H1 (cell line): ENCODE measurements at regions of chr3 and their contacts with region 1.

Region 1: GRCh38 chr3:75727985-75728384 is 57.4 kb downstream of the ZNF717 start:
- DNase-seq: no peak
- H3K4me3 ChIP-seq: no peak overlapping the region
- H3K27ac ChIP-seq: no peak overlapping the region
- H3K4me1 ChIP-seq: no peaks in the 10 kb centered on the region
- H3K27me3 ChIP-seq: peaks cover 0 to 1% (median 0%) of the 10 kb centered on the region in 4 experiments; a peak in 1 of 7 replicates
- CTCF ChIP-seq: no peak
- EP300 ChIP-seq: no peak
- POLR2A ChIP-seq: no peak
- RAD21 ChIP-seq: no peak

Region 2: DNA sequence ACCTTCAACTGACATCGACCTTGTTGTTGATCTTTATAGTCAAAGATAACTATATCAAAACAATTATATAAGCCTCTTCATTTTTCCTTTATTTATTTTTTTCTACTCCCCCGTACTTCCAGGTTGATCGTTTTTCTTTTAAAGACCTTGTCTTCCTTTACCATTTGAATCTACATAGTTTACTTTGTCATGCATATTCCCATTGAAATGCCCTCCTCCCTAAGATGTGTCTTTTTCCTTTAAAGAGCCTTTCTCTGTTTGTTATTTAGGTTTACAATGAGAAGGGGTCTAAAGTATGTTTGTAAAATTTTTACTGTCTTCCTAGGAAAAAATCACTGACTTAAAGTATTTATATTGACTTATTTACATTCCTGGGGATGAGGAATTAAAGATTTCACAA is 86.8 kb after region 1 on chr3:
- CTCF ChIA-PET with region 1: interaction called, 12 read pairs
- POLR2A ChIA-PET with region 1: no interaction called
- DNase-seq: no peak
- H3K4me3 ChIP-seq: peak overlapping the region in 1 of 4 experiments; percentile 32; a peak in 1 of 8 replicates
- H3K27ac ChIP-seq: no peak overlapping the region
- H3K4me1 ChIP-seq: peaks cover 0 to 9% (median 6%) of the 10 kb centered on the region in 4 experiments; a peak in 5 of 7 replicates
- H3K27me3 ChIP-seq: no peaks in the 10 kb centered on the region
- CTCF ChIP-seq: no peak
- EP300 ChIP-seq: no peak
- POLR2A ChIP-seq: no peak
- RAD21 ChIP-seq: no peak